Activated CD4-positive, alpha-beta T cell treated with anti-CD3 and anti-CD28 coated beads for 36 hours (primary cell): ENCODE measurements at regions of chr20 and their contacts with region 1.

Region 1: DNA sequence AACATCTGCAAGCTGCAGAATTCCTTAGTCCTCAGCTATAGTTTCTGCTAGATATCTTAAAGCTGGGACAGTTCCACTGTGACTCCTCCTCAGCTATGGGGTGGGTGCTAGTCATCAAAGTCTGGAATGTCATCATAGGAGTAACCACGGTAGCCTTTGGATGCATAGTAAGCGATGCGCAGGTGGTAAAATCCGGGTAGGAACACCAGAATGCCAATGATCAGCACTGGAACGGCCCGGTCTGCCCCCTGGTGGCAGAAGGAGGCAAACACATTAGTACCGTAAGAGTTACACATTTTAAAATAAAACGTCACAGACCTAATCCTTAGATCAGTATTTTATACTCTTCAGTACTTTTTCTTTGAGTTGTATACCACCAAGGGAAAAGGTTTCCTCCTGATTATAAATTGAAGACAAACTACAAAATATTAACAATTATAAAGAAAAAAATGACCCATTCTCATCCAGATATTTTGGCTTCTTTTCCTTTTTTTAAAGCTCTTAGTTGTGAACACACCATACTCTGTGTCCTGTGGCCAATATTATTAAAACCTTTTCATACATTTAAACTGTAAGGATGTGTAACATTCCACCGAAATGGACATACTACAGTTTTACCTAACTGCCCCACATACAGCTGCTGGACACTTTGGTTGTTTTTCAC is 18.9 kb downstream of the PCNA start:
- DNase-seq: peak; percentile 84
- ATAC-seq: peak; percentile 89
- H3K4me3 Mint-ChIP-seq: no peak overlapping the region
- H3K27ac Mint-ChIP-seq: no peak overlapping the region
- H3K4me1 Mint-ChIP-seq: peaks cover 5% of the 10 kb centered on the region
- H3K27me3 Mint-ChIP-seq: no peaks in the 10 kb centered on the region

Region 2: DNA sequence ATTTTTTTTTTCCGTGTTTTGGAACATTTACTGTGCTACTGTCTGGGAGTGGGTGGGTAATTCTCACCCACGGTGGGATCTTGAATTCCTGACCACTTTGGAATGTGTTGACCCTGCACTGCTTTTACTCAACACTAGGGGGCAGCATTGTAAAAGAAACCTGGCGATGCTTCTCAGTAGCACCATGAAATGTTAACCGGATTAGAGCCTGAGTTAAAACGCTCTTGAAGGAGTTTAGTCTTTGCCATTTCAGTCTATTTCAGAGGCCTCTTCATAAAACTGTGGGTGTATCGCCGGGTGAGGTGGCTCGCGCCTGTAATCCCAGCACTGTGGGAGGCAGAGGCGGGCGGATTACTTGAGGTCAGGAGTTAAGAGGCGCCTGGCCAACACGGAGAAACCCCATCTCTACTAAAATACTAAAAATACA is 493.5 kb before region 1 on chr20:
- CTCF ChIA-PET with region 1: no interaction called
- POLR2A ChIA-PET with region 1: no interaction called
- intact Hi-C with region 1: loop called (anchors 1 to 5 kb)
- DNase-seq: peak; percentile 69
- ATAC-seq: peak; percentile 90
- H3K4me3 Mint-ChIP-seq: no peak overlapping the region
- H3K27ac Mint-ChIP-seq: no peak overlapping the region
- H3K4me1 Mint-ChIP-seq: peaks cover 2% of the 10 kb centered on the region
- H3K27me3 Mint-ChIP-seq: peaks cover 5% of the 10 kb centered on the region

Region 3: GRCh38 chr20:4956200-4956810 is 144.5 kb before region 1 on chr20:
- CTCF ChIA-PET with region 1: interaction called, 8 read pairs
- POLR2A ChIA-PET with region 1: no interaction called
- intact Hi-C with region 1: loop called in 1 of 2 experiments (anchors 1 kb)
- DNase-seq: no peak
- ATAC-seq: peak; percentile 77
- H3K4me3 Mint-ChIP-seq: no peak overlapping the region
- H3K27ac Mint-ChIP-seq: no peak overlapping the region
- H3K4me1 Mint-ChIP-seq: peaks cover 15% of the 10 kb centered on the region
- H3K27me3 Mint-ChIP-seq: no peaks in the 10 kb centered on the region

Region 4: GRCh38 chr20:5056801-5057599 is 43.8 kb before region 1 on chr20:
- CTCF ChIA-PET with region 1: interaction called, 63 read pairs
- POLR2A ChIA-PET with region 1: no interaction called
- intact Hi-C with region 1: loop called (anchors 1 kb)
- DNase-seq: peak; percentile 84
- ATAC-seq: peak; percentile 97
- H3K4me3 Mint-ChIP-seq: no peak overlapping the region
- H3K27ac Mint-ChIP-seq: peak overlapping the region; percentile 92
- H3K4me1 Mint-ChIP-seq: peaks cover 16% of the 10 kb centered on the region
- H3K27me3 Mint-ChIP-seq: no peaks in the 10 kb centered on the region

Region 5: DNA sequence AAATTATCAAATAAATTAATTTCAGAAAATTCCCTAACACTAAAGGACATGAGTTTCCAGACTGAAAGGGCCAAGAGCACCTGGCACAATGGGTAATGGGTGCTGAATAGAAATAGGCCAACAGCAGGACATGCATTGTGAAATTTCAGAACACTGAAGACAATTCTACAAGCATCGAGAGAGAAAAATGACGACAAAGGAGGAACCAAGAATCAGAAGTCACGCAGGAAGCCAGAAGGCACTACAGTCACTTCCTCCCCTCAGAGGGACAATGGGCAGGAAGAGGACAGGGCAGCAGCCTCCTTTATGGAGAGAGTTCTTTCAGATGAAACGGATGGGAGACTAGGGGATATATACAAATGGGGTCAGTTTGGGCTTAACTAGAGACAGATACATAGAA is 10.6 kb before region 1 on chr20:
- CTCF ChIA-PET with region 1: interaction called, 26 read pairs
- POLR2A ChIA-PET with region 1: no interaction called
- intact Hi-C with region 1: no loop called
- DNase-seq: no peak
- ATAC-seq: peak; percentile 33
- H3K4me3 Mint-ChIP-seq: no peak overlapping the region
- H3K27ac Mint-ChIP-seq: peak overlapping the region; percentile 40
- H3K4me1 Mint-ChIP-seq: peaks cover 12% of the 10 kb centered on the region
- H3K27me3 Mint-ChIP-seq: no peaks in the 10 kb centered on the region

Region 6: DNA sequence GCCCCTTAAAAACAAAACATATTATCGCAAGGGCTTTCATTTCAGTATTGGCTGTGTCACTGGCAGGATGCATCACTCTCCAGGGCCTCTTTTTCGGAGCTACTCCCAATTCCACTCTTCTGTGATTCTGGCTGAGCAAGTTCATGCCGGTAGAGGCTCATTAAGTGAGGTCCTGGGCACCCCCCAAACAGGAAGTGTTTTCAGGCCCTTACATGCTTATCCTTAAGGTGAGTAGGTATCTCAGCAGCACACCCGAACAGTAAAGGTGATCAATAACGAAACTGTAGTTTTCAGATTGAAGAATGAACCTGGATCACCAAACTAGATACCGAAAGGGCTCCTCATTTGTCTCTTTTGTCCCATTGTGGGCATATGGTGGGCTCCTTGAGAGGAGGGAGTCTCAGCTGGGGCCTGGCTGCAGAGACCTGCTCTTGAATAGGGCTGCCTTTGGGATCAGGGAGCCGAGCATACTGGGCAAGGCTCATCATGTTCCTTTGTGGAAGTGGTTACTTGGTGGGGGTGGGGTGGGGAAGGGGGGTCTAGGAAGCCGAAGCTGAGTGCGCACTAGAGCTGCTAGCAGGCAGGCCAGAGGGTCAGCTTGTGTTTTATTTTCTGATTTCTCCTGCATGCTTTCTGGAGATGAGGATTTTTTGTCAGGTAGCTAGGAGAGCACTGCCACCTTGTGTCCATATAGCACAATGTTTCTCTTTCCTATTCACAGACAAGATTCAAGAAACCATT is 91.2 kb after region 1 on chr20:
- CTCF ChIA-PET with region 1: interaction called, 21 read pairs
- POLR2A ChIA-PET with region 1: no interaction called
- intact Hi-C with region 1: no loop called
- DNase-seq: peak; percentile 46
- ATAC-seq: peak; percentile 79
- H3K4me3 Mint-ChIP-seq: no peak overlapping the region
- H3K27ac Mint-ChIP-seq: peak overlapping the region; percentile 80
- H3K4me1 Mint-ChIP-seq: peaks cover 19% of the 10 kb centered on the region
- H3K27me3 Mint-ChIP-seq: no peaks in the 10 kb centered on the region

Region 7: GRCh38 chr20:5430670-5431069 is 329.9 kb after region 1 on chr20:
- CTCF ChIA-PET with region 1: no interaction called
- POLR2A ChIA-PET with region 1: no interaction called
- intact Hi-C with region 1: no loop called
- DNase-seq: no peak
- ATAC-seq: no peak
- H3K4me3 Mint-ChIP-seq: no peak overlapping the region
- H3K27ac Mint-ChIP-seq: no peak overlapping the region
- H3K4me1 Mint-ChIP-seq: no peaks in the 10 kb centered on the region
- H3K27me3 Mint-ChIP-seq: peaks cover 11% of the 10 kb centered on the region